ENCODE measurements at regions of chr22 and their contacts with region 1.

Region 1: DNA sequence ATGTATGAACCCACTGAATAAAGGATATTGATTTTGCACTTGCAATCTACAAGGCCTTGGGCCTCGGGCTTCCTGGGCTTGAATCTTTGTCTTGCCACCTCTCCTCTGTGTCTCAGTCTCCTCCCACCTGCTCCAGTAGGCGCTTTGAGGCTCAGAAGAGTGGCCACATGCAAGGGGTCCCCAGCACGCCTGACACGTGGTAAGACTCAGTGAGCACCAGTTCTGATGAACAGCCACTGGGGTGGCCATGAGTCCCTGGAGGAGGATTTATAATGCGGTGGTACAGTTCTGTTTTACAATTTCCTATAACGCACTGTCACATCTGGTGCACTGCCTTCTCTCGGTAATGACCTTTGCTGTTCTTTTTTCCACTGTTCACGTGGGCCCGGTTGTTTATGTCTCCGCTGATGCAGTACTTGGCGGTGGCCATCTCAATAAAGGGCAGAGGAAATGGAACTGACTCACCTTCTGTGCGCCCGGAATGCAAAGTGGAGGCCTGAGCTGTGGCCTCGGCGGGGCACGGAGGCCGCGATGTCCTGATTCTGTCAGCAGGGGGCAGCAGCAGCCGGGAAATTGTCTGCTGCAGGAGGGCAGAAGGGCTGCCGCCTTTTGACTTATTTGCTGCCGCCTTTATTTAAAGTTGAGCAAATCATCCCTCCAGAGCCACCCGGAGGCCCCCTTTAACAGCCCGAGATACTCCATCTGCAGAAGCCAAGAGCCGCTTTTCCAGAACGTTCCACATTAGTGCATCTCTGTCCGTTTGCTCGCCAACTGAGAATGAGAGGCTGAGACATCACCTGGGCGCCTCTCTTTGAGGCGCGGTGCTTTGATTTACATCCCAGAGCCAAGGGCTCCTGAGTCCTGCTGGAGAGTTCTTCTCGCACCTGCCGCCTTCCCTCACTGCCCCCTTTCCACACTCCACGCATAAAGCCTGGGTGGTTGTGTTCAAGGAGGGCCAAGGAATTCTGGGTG is 6.0 kb upstream of the IFT27 start:
- DNase-seq: peak; percentile 70 to 77
- H3K4me3 ChIP-seq: no peak overlapping the region
- H3K27ac ChIP-seq: no peak overlapping the region
- H3K4me1 ChIP-seq: no peaks in the 10 kb centered on the region
- H3K27me3 ChIP-seq: no peaks in the 10 kb centered on the region
- CTCF ChIP-seq: peak; percentile 75 to 92 (median 86)
- POLR2A ChIP-seq: no peak

Region 2: DNA sequence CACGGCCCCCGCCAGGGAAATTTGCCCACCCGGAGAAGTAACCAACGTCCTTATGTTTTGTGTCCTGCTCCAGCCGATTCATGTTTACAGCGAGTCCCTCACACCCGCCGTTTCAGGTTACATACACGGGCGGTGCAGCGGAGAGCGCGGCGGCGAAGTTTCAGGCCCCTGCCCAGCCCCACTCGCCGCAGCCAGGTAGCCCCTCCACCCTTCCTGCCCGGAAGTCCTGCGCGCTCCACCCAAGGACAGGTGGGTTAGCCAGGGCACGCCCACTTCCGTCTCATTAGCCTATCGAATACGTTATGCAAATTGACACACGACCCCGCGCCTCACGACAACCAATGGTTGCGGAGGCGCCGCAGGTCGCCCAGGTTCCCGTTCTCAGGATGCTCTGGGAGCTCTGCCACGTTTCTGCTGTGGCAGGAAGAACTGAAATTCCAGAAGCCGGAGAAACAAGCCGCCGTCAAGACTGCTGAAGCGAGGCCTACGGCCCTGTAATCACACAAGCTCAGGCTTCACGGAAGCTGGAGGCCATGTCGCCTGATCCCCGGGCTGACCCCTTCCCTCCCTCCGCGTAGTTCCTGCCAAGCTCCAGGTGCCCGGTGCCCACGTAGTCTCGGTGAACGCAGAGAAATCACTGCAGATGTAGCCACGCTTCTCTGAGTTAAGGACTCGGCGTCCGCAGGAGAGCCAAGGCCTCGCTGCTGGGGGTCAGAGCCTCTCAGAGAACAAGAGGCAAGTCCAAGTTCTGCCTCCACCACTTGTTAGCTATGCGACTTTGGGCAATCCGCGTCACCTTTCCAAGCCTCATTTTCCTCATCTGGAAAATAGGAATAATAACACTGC is 371.8 kb before region 1 on chr22:
- intact Hi-C with region 1: no loop called
- DNase-seq: peak; percentile 100
- H3K4me3 ChIP-seq: peak overlapping the region in 2 of 3 donors; percentile 16 to 23
- H3K27ac ChIP-seq: peak overlapping the region; percentile 87 to 95 (median 91)
- H3K4me1 ChIP-seq: peaks cover 39 to 48% of the 10 kb centered on the region in 2 donors
- H3K27me3 ChIP-seq: no peaks in the 10 kb centered on the region
- CTCF ChIP-seq: peak in 5 of 6 experiments; percentile 20 to 57 (median 37)
- POLR2A ChIP-seq: peak; percentile 57 to 97

Region 3: GRCh38 chr22:36546092-36546804 is 235.7 kb before region 1 on chr22:
- intact Hi-C with region 1: loop called (anchors 10 kb)
- DNase-seq: peak; percentile 26 to 34
- H3K4me3 ChIP-seq: no peak overlapping the region
- H3K27ac ChIP-seq: no peak overlapping the region
- H3K4me1 ChIP-seq: no peaks in the 10 kb centered on the region
- H3K27me3 ChIP-seq: no peaks in the 10 kb centered on the region
- CTCF ChIP-seq: peak in 5 of 6 experiments; percentile 15 to 51 (median 26)
- POLR2A ChIP-seq: no peak

Region 4: GRCh38 chr22:36977947-36978660 is 196.2 kb after region 1 on chr22:
- intact Hi-C with region 1: loop called (anchors 5 kb)
- DNase-seq: peak; percentile 89 to 91
- H3K4me3 ChIP-seq: peak overlapping the region in 1 of 3 donors; percentile 2
- H3K27ac ChIP-seq: no peak overlapping the region
- H3K4me1 ChIP-seq: peaks cover 0 to 7% of the 10 kb centered on the region in 2 donors
- H3K27me3 ChIP-seq: no peaks in the 10 kb centered on the region
- CTCF ChIP-seq: peak; percentile 68 to 93 (median 88)
- POLR2A ChIP-seq: peak in 1 of 2 donors; percentile 29

Region 5: GRCh38 chr22:37051391-37052385 is 269.7 kb after region 1 on chr22 and contains the start of gene KCTD17:
- intact Hi-C with region 1: loop called (anchors 10 kb)
- DNase-seq: peak; percentile 51
- H3K4me3 ChIP-seq: peak within 1 kb of the TSS in 2 of 3 donors; percentile 27 to 53
- H3K27ac ChIP-seq: no peak within 1 kb of the TSS
- H3K4me1 ChIP-seq: peaks cover 8 to 28% of the 10 kb centered on the region in 2 donors
- H3K27me3 ChIP-seq: no peaks in the 10 kb centered on the region
- CTCF ChIP-seq: no peak
- POLR2A ChIP-seq: peak in 1 of 2 donors; percentile 13
- total RNA-seq, gene KCTD17: 6.1 to 18.9 (median 12.6) TPM

Measured in thyroid gland (tissue), 4 donors.